ENCODE measurements at regions of chr20 and their contacts with region 1.

Region 1: GRCh38 chr20:31605031-31605901 is at the start of gene ID1:
- DNase-seq: peak; percentile 87 to 95 (median 90)
- ATAC-seq: peak; percentile 86 to 93 (median 90)
- H3K4me3 ChIP-seq: peak within 1 kb of the TSS; percentile 40 to 77 (median 68)
- H3K27ac ChIP-seq: peak within 1 kb of the TSS; percentile 18 to 78 (median 72)
- H3K4me1 ChIP-seq: peaks cover 3 to 25% (median 4%) of the 10 kb centered on the region in 3 donors
- H3K27me3 ChIP-seq: no peaks in the 10 kb centered on the region
- CTCF ChIP-seq: no peak
- total RNA-seq, gene ID1: 9.5 to 39.3 (median 17.4) TPM

Region 2: GRCh38 chr20:31560094-31560899 is 45.0 kb before region 1 on chr20:
- intact Hi-C with region 1: loop called (anchors 5 to 10 kb)
- DNase-seq: peak in 4 of 6 donors; percentile 39 to 77 (median 62)
- ATAC-seq: peak; percentile 36 to 65 (median 58)
- H3K4me3 ChIP-seq: no peak overlapping the region
- H3K27ac ChIP-seq: peak overlapping the region in 1 of 4 donors; percentile 52
- H3K4me1 ChIP-seq: no peaks in the 10 kb centered on the region
- H3K27me3 ChIP-seq: no peaks in the 10 kb centered on the region
- CTCF ChIP-seq: peak; percentile 64 to 80 (median 73)

Region 3: GRCh38 chr20:31572701-31573554 is 32.3 kb before region 1 on chr20:
- intact Hi-C with region 1: loop called in 2 of 3 experiments (anchors 5 kb)
- DNase-seq: peak; percentile 95 to 98 (median 96)
- ATAC-seq: peak; percentile 87 to 91 (median 89)
- H3K4me3 ChIP-seq: peak overlapping the region; percentile 13 to 52 (median 30)
- H3K27ac ChIP-seq: peak overlapping the region; percentile 78 to 91 (median 80)
- H3K4me1 ChIP-seq: peaks cover 7 to 12% (median 7%) of the 10 kb centered on the region in 3 donors
- H3K27me3 ChIP-seq: no peaks in the 10 kb centered on the region
- CTCF ChIP-seq: no peak

Region 4: DNA sequence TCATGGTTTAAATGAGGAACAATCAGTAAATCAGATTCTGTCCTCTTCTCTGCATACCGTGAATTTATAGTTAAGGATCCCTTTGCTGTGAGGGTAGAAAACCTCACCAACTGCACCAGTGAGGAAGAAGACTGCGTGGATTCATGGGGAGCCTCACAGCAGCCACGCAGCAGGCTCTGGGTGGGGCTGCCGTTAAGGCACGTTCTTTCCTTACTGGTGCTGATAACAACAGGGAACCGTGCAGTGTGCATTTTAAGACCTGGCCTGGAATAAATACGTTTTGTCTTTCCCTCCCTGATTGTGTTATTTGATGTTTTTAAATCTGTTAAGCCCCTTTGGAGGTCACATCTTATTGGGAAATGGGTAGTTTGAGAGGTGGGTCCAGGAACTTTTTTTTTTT is 196.2 kb after region 1 on chr20:
- intact Hi-C with region 1: no loop called
- DNase-seq: no peak
- ATAC-seq: no peak
- H3K4me3 ChIP-seq: no peak overlapping the region
- H3K27ac ChIP-seq: no peak overlapping the region
- H3K4me1 ChIP-seq: no peaks in the 10 kb centered on the region
- H3K27me3 ChIP-seq: no peaks in the 10 kb centered on the region
- CTCF ChIP-seq: no peak